Activated CD8-positive, alpha-beta memory T cell treated with anti-CD3 and anti-CD28 coated beads, Interleukin-2, amount 10 ng/mL, durations not matched to agents 7 days and 5 days (primary cell): ENCODE measurements at regions of chr1 and their contacts with region 1.

Region 1: GRCh38 chr1:151098126-151098525 is 27.6 kb downstream of the GABPB2 start:
- DNase-seq: no peak
- ATAC-seq: no peak
- H3K4me3 Mint-ChIP-seq: no peak overlapping the region
- H3K27ac Mint-ChIP-seq: no peak overlapping the region
- H3K4me1 Mint-ChIP-seq: no peaks in the 10 kb centered on the region
- H3K27me3 Mint-ChIP-seq: no peaks in the 10 kb centered on the region

Region 2: GRCh38 chr1:151005729-151006315 is 92.3 kb before region 1 on chr1:
- CTCF ChIA-PET with region 1: no interaction called
- DNase-seq: no peak
- ATAC-seq: no peak
- H3K4me3 Mint-ChIP-seq: peak overlapping the region; percentile 99
- H3K27ac Mint-ChIP-seq: peak overlapping the region; percentile 94
- H3K4me1 Mint-ChIP-seq: peaks cover 63% of the 10 kb centered on the region
- H3K27me3 Mint-ChIP-seq: no peaks in the 10 kb centered on the region

Region 3: DNA sequence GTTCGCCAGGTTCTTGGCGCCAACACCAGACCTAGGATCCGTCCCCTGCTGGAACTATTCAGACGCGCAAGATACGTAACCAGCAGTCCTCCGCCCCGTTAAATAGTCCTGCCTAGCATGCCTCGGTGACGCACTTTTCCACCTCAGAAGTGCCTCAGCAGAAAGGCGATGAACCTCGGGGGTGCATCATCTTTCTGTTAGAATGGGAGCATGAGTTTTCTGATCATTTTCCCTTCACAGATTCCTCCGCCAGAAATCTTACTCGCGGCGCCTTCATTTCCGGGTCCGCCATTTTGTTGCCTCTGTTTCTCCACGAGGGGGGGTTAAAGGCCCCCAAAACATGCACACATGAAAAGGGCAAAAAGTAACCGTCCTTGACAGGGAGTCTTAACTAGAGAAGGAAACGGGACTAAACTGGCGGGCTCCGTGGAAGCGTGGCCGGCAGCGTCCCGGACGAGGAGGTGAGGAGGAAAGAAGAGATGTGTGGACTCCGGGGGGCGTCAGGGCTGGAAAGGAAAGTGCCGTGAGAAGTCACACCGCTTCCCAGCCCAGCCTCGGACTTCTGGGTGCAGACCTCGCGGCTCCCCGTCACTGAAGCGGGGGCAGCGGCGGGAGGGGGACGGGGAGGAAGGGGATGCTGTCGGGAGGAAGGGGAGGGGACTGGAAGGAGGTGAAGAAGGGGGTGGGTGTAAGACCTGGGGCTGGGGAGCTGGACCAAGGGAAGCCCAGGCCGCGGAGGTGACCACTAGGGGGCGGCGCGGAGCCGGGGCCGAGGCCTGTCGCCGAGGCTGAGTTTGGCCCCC is 27.5 kb before region 1 on chr1 and contains the start of gene GABPB2:
- CTCF ChIA-PET with region 1: interaction called, 11 read pairs
- DNase-seq: peak; percentile 91
- ATAC-seq: peak; percentile 85
- H3K4me3 Mint-ChIP-seq: peak within 1 kb of the TSS; percentile 90
- H3K27ac Mint-ChIP-seq: peak within 1 kb of the TSS; percentile 98
- H3K4me1 Mint-ChIP-seq: peaks cover 26% of the 10 kb centered on the region
- H3K27me3 Mint-ChIP-seq: no peaks in the 10 kb centered on the region
- total RNA-seq, gene GABPB2: 20.0 to 23.9 TPM

Region 4: DNA sequence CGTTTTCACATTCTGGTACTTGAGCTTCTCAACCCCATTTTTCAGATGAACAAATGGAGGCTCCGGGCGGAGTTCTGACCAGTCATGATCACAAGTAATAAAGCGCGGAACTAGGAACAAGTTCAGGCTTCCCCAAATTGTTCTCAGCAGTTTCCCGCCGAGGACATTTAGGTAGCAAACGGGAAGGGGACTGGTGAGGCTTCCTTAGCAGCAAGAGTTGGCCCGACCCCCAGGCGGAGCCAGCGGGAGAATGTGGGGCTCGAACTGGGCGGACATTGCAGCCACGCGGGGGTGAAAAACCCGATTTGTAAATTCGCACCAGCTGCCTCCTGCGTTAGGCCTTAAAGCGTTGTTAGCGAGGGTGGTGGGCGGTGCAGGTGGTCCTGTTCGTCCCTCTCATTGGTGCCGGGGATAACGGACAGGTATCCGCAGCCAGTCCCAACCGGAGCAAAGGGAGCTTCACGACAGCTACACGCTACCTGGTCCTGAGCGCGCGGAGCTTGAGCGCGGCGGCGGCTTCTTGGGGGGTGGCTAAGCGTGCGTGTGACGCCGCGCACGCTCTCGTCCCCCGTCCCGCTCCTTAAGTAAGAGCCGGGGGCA is 33.0 kb after region 1 on chr1:
- CTCF ChIA-PET with region 1: interaction called, 11 read pairs
- DNase-seq: peak; percentile 82
- ATAC-seq: peak; percentile 98
- H3K4me3 Mint-ChIP-seq: peak overlapping the region; percentile 64
- H3K27ac Mint-ChIP-seq: peak overlapping the region; percentile 1
- H3K4me1 Mint-ChIP-seq: peaks cover 15% of the 10 kb centered on the region
- H3K27me3 Mint-ChIP-seq: peaks cover 16% of the 10 kb centered on the region

Region 5: GRCh38 chr1:151156515-151156819 is 58.3 kb after region 1 on chr1 and contains the start of gene TNFAIP8L2:
- CTCF ChIA-PET with region 1: interaction called, 157 read pairs
- DNase-seq: peak; percentile 90
- ATAC-seq: peak; percentile 92
- H3K4me3 Mint-ChIP-seq: peak within 1 kb of the TSS; percentile 96
- H3K27ac Mint-ChIP-seq: peak within 1 kb of the TSS; percentile 93
- H3K4me1 Mint-ChIP-seq: peaks cover 51% of the 10 kb centered on the region
- H3K27me3 Mint-ChIP-seq: no peaks in the 10 kb centered on the region
- total RNA-seq, gene TNFAIP8L2: 14.5 to 17.6 TPM

Region 6: GRCh38 chr1:151251656-151252470 is 153.7 kb after region 1 on chr1:
- CTCF ChIA-PET with region 1: interaction called, 27 read pairs
- DNase-seq: peak; percentile 81
- ATAC-seq: peak; percentile 43
- H3K4me3 Mint-ChIP-seq: no peak overlapping the region
- H3K27ac Mint-ChIP-seq: no peak overlapping the region
- H3K4me1 Mint-ChIP-seq: peaks cover 22% of the 10 kb centered on the region
- H3K27me3 Mint-ChIP-seq: no peaks in the 10 kb centered on the region